Caco-2 (cell line): ENCODE measurements at regions of chr17 and their contacts with region 1.

Region 1: DNA sequence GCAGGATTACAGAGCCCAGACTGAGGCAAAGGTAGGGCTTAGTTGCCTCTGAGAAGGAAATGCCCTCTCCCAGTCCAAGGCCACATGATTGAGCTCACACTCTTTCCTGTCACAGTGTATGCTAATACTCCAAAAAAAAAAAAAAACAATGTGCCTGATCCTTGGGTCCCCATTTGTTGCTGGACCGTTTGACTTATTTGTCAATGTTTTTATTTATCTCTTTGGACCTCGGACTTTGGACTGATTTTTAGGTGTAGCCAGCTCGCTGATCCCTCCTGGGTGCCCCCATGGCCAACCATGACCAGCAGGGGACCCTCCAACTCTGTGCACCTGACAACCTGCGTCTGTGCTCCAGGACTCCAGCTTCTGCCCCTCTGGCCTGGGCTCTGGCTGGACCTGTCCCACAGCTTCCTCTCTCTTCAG is 622 bp upstream of the CCL16 start:
- DNase-seq: peak; percentile 58 to 62
- H3K4me3 ChIP-seq: no peak overlapping the region
- H3K4me3 Mint-ChIP-seq: no peak overlapping the region
- H3K27ac Mint-ChIP-seq: no peak overlapping the region
- H3K4me1 ChIP-seq: peaks cover 24% of the 10 kb centered on the region
- H3K4me1 Mint-ChIP-seq: peaks cover 9% of the 10 kb centered on the region
- H3K27me3 ChIP-seq: no peaks in the 10 kb centered on the region
- H3K27me3 Mint-ChIP-seq: no peaks in the 10 kb centered on the region
- CTCF ChIP-seq: peak in 1 of 2 experiments; percentile 48

Region 2: GRCh38 chr17:36034127-36034526 is 52.2 kb after region 1 on chr17:
- CTCF ChIA-PET with region 1: no interaction called
- POLR2A ChIA-PET with region 1: no interaction called
- intact Hi-C with region 1: no loop called
- DNase-seq: no peak
- H3K4me3 ChIP-seq: no peak overlapping the region
- H3K4me3 Mint-ChIP-seq: no peak overlapping the region
- H3K27ac Mint-ChIP-seq: no peak overlapping the region
- H3K4me1 ChIP-seq: no peaks in the 10 kb centered on the region
- H3K4me1 Mint-ChIP-seq: peaks cover 10% of the 10 kb centered on the region
- H3K27me3 ChIP-seq: no peaks in the 10 kb centered on the region; the same call in none of the 2 replicates
- H3K27me3 Mint-ChIP-seq: peaks cover 12% of the 10 kb centered on the region
- CTCF ChIP-seq: no peak

Region 3: GRCh38 chr17:36072431-36073121 is 90.7 kb after region 1 on chr17:
- CTCF ChIA-PET with region 1: interaction called, 13 read pairs
- POLR2A ChIA-PET with region 1: no interaction called
- intact Hi-C with region 1: no loop called
- DNase-seq: peak; percentile 54 to 77
- H3K4me3 ChIP-seq: no peak overlapping the region
- H3K4me3 Mint-ChIP-seq: no peak overlapping the region
- H3K27ac Mint-ChIP-seq: no peak overlapping the region
- H3K4me1 ChIP-seq: no peaks in the 10 kb centered on the region
- H3K4me1 Mint-ChIP-seq: no peaks in the 10 kb centered on the region
- H3K27me3 ChIP-seq: no peaks in the 10 kb centered on the region
- H3K27me3 Mint-ChIP-seq: no peaks in the 10 kb centered on the region
- CTCF ChIP-seq: peak; percentile 81 to 89